SK-N-SH (cell line): ENCODE measurements at regions of chr10 and their contacts with region 1.

Region 1: GRCh38 chr10:123165445-123166072 is 11.4 kb downstream of the BUB3 start:
- DNase-seq: peak; percentile 40
- H3K4me3 ChIP-seq: no peak overlapping the region
- H3K27ac ChIP-seq: no peak overlapping the region; a peak in 1 of 4 replicates
- H3K4me1 ChIP-seq: peaks cover 0 to 4% of the 10 kb centered on the region in 2 experiments; a peak in 2 of 4 replicates
- H3K27me3 ChIP-seq: no peaks in the 10 kb centered on the region
- CTCF ChIP-seq: peak; percentile 38
- EP300 ChIP-seq: no peak
- RAD21 ChIP-seq: peak; percentile 25; the same call in 1 of the 2 replicates

Region 2: GRCh38 chr10:123175389-123176387 is 10.1 kb after region 1 on chr10:
- CTCF ChIA-PET with region 1: interaction called, 12 read pairs
- POLR2A ChIA-PET with region 1: no interaction called
- DNase-seq: no peak
- H3K4me3 ChIP-seq: no peak overlapping the region
- H3K27ac ChIP-seq: no peak overlapping the region
- H3K4me1 ChIP-seq: no peaks in the 10 kb centered on the region
- H3K27me3 ChIP-seq: no peaks in the 10 kb centered on the region
- CTCF ChIP-seq: no peak
- EP300 ChIP-seq: no peak
- RAD21 ChIP-seq: no peak

Region 3: DNA sequence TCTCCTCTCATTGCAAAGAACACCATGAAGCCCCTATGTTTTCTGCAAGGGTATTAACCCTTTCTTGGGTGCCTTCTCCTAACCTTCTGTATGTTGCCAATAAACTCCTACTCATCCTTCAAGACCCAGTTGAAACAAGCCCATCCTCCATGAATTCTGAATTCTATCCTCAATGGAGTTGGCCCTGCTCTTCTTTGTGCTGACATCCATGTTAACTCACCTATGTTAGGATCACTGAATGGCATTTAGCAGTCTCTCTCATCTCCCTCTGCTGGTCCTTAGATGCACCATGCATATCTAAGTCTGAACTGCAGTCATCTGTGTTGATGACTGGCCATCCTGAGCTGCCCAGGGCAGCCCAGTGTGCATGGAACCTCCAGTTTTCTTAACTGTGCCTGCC is 118.5 kb after region 1 on chr10:
- CTCF ChIA-PET with region 1: no interaction called
- POLR2A ChIA-PET with region 1: no interaction called
- DNase-seq: no peak
- H3K4me3 ChIP-seq: no peak overlapping the region
- H3K27ac ChIP-seq: no peak overlapping the region
- H3K4me1 ChIP-seq: peaks cover 0 to 11% of the 10 kb centered on the region in 2 experiments; a peak in 2 of 4 replicates
- H3K27me3 ChIP-seq: no peaks in the 10 kb centered on the region
- CTCF ChIP-seq: no peak
- EP300 ChIP-seq: no peak
- RAD21 ChIP-seq: no peak